SK-N-SH (cell line): ENCODE measurements at regions of chr10 and their contacts with region 1.

Region 1: DNA sequence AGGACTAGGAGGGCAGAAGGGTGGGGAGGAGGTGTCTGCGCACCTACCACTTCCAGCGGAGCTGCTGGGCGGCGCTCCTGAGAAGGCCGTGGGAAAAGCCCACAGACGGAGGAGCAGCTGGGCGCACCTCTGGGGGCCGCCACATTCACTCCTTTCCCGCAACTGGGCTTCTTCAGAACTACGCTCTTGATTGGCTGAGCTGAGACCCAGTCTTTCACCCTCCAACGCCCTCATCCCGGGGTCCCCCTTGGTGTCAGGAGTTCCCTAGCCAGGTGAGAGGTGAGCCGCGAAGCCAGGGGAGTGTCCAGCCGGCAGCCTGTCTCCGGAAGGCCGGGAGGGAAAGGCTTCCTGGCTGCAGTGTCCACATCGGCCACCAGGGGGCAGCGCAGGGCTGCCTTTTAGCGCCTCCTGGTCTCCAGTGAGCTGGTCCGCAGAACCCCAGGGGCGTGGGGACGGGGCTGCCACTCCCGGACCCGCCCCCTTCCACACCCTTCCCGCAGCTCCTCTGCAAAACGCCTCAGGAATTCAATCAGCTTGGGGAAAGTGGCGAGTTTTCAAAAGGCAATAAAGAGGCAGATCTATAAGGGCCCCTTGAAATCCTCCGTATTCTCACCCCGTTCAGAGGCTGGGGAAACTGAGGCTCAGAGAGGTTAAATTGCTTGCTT is 98.8 kb downstream of the CHST15 start:
- DNase-seq: peak; percentile 96
- H3K4me3 ChIP-seq: peak overlapping the region in 1 of 2 experiments; percentile 23; a peak in 1 of 4 replicates
- H3K27ac ChIP-seq: no peak overlapping the region
- H3K4me1 ChIP-seq: no peaks in the 10 kb centered on the region; a peak in 1 of 4 replicates
- H3K27me3 ChIP-seq: no peaks in the 10 kb centered on the region
- CTCF ChIP-seq: peak; percentile 71
- EP300 ChIP-seq: no peak
- RAD21 ChIP-seq: peak; percentile 92

Region 2: GRCh38 chr10:123974406-123974805 is 20.1 kb before region 1 on chr10:
- CTCF ChIA-PET with region 1: interaction called, 15 read pairs
- POLR2A ChIA-PET with region 1: no interaction called
- DNase-seq: no peak
- H3K4me3 ChIP-seq: no peak overlapping the region
- H3K27ac ChIP-seq: no peak overlapping the region
- H3K4me1 ChIP-seq: no peaks in the 10 kb centered on the region
- H3K27me3 ChIP-seq: no peaks in the 10 kb centered on the region
- CTCF ChIP-seq: no peak
- EP300 ChIP-seq: no peak
- RAD21 ChIP-seq: no peak

Region 3: DNA sequence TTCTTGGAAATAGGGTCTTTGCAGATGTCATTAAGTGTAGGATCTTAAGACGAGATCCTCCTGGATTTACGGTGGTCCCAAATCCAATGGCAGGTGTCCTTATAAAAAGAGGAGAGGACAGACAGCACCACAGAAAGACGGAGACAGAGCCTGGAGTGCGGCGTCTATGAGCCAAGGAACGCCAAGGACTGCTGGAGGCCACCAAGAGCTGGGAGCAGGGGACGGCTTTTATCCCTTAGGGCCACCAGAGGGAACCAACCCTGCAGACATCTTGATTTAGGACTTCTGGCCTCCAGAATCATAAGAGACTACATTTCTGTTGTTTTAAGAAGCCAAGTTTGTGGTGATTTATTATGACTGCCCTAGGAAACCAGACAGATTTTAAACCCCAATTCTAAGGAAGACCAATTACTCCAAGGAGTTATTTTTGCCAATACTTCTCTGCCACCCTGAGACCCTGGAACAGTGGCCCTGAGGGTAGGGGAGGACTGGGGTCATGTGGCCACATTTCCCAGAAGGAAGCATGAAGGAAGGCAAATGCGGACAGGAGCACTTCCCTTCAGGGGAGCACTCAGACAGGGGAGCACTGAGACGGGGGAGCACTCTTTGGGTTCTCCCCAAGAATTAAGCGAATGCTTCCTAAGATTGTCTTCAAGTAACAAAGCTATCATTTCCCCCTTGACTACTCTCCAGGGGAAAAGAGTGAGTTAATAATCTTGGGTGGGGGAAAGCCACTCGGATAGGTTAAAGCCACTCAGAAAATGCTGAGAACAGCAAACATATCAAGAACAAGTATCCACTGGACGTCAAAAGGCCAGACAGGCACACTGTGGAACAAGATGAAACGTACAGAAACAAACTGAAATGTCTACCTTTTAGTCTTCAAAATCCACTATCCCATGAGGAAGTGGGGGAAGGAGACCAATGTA is 31.4 kb after region 1 on chr10:
- CTCF ChIA-PET with region 1: interaction called, 12 read pairs
- POLR2A ChIA-PET with region 1: no interaction called
- DNase-seq: peak; percentile 53
- H3K4me3 ChIP-seq: no peak overlapping the region
- H3K27ac ChIP-seq: no peak overlapping the region
- H3K4me1 ChIP-seq: no peaks in the 10 kb centered on the region
- H3K27me3 ChIP-seq: no peaks in the 10 kb centered on the region
- CTCF ChIP-seq: no peak
- EP300 ChIP-seq: no peak
- RAD21 ChIP-seq: peak; percentile 53

Region 4: DNA sequence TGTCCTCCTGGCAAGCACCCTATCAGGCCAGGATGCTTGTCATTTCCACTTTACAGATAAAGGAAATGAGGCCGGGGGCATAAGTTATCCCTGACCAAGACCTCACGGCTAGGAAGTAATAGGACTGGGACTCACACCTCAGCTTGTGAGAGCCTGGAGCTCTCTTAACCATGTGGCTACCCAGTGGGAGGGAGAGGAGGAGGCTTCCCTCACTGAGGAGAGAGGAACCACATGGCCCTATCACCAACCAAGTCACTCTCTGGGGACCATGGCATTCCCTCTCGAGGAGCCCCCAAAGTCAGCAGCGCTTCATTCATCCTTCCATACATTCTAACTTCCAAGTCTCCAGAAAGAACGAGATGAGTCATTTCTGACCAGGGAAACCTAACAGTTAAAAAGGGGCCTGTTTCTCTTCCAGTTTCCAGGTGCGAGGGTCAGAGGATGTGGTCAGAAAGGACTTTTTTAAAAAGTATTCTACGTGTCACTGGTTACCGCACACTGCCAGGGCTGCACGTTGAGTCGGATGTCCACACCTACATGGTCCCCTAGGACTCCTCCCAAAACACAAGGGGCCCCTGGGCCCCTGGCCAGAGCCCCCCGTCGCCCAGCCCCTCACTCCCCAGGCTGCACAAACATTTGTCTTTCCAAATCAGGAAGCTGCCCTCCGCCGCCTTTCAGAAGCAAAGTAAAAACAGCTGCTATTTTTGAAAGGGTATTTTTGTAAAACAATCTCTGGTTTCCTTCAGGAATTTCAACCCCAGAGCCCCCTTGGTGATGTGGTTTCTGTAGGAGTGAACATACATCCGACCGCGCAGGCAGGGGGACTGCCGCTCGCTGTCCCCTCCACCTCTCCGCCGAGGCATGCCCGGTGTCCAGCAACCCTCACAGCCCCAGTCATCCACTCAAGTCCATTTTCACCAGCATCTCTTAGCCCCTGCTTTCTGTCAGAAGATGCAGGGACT is 227.1 kb after region 1 on chr10:
- CTCF ChIA-PET with region 1: interaction called, 25 read pairs
- POLR2A ChIA-PET with region 1: no interaction called
- DNase-seq: peak; percentile 77
- H3K4me3 ChIP-seq: no peak overlapping the region
- H3K27ac ChIP-seq: no peak overlapping the region
- H3K4me1 ChIP-seq: peaks cover 0 to 26% of the 10 kb centered on the region in 2 experiments; a peak in 1 of 4 replicates
- H3K27me3 ChIP-seq: no peaks in the 10 kb centered on the region
- CTCF ChIP-seq: no peak
- EP300 ChIP-seq: 0 out of 4 replicates have a peak, but pooled peaks of 1 of the 2 experiments have one; percentile 24
- RAD21 ChIP-seq: no peak

Region 5: GRCh38 chr10:124259139-124259825 is 264.7 kb after region 1 on chr10:
- CTCF ChIA-PET with region 1: interaction called, 52 read pairs
- POLR2A ChIA-PET with region 1: no interaction called
- DNase-seq: peak; percentile 51
- H3K4me3 ChIP-seq: no peak overlapping the region
- H3K27ac ChIP-seq: no peak overlapping the region
- H3K4me1 ChIP-seq: peaks cover 0 to 15% of the 10 kb centered on the region in 2 experiments; a peak in 1 of 4 replicates
- H3K27me3 ChIP-seq: no peaks in the 10 kb centered on the region
- CTCF ChIP-seq: no peak
- EP300 ChIP-seq: no peak
- RAD21 ChIP-seq: peak; percentile 63

Region 6: GRCh38 chr10:124354411-124355382 is 360.1 kb after region 1 on chr10:
- CTCF ChIA-PET with region 1: interaction called, 31 read pairs
- POLR2A ChIA-PET with region 1: no interaction called
- DNase-seq: peak; percentile 84
- H3K4me3 ChIP-seq: peak overlapping the region; percentile 36 to 42
- H3K27ac ChIP-seq: peak overlapping the region in 1 of 2 experiments; percentile 90; a peak in 2 of 4 replicates
- H3K4me1 ChIP-seq: peaks cover 0 to 23% of the 10 kb centered on the region in 2 experiments; a peak in 2 of 4 replicates
- H3K27me3 ChIP-seq: no peaks in the 10 kb centered on the region
- CTCF ChIP-seq: no peak
- EP300 ChIP-seq: peak in 1 of 2 experiments; percentile 84; a peak in 2 of 4 replicates
- RAD21 ChIP-seq: no peak; the same call in 1 of the 2 replicates